ENCODE measurements at regions of chr19 and their contacts with region 1.

Region 1: DNA sequence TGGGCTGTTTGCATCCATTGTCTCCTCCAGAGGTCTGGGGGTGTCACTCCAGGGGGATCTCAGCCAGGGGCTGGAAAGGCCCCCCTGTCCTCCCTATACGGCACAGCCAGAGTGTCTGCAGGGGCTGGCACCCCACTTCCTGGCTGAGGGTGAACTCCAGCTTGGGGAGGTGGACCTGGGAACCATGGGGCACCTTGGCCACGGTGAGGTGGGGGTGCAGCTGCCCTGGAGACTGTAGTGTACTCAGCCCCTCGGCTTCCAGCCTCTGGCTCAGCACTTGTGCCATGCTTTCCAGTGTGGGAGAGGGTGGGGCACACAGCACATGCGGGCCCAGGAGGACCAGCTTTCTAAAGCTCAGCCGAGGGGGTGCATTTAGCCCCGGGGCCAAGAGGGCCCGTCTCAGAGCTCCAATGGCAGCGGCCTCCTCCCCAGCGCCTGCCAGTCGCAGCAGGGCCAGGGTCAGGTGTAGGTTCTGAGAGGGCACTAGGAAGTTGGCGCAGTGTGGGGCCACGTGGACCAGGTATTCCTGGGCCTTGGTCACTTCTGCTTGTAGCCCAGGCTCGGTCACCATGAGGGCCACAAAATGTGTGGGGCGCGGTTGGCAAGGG is 1.4 kb downstream of the LENG9 start:
- DNase-seq: peak; percentile 37
- H3K4me3 ChIP-seq: peak overlapping the region; percentile 66
- H3K27ac ChIP-seq: peak overlapping the region; percentile 97
- H3K4me1 ChIP-seq: peaks cover 30% of the 10 kb centered on the region
- H3K27me3 ChIP-seq: no peaks in the 10 kb centered on the region
- CTCF ChIP-seq: no peak

Region 2: DNA sequence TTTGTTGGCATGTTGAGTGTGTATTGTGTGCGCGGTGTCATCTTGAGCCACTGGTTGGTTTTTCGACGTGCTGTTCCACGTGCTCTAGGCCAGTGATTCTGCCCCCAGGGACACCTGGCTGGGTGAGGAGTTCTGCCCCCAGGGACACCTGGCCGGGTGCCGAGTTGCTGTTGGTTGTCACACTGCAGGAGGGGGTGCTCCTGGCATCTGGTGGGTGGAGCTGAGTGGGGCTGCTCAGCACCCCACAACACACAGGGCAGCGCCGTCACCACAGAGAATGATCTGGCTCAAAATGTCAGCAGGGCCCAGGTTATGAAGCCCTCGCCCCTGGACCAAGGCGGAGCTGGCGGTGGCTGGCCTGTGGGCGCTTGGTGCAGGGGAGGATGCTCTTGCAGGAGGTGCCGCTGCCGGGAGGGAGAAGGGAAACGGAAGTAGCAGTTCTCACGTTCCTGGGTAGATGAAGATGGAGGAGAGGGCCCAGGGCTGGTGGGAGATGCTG is 27.4 kb before region 1 on chr19:
- CTCF ChIA-PET with region 1: no interaction called
- POLR2A ChIA-PET with region 1: no interaction called
- intact Hi-C with region 1: no loop called
- DNase-seq: no peak
- H3K4me3 ChIP-seq: no peak overlapping the region
- H3K27ac ChIP-seq: no peak overlapping the region
- H3K4me1 ChIP-seq: peaks cover 16% of the 10 kb centered on the region
- H3K27me3 ChIP-seq: peaks cover 2% of the 10 kb centered on the region
- CTCF ChIP-seq: no peak

Region 3: DNA sequence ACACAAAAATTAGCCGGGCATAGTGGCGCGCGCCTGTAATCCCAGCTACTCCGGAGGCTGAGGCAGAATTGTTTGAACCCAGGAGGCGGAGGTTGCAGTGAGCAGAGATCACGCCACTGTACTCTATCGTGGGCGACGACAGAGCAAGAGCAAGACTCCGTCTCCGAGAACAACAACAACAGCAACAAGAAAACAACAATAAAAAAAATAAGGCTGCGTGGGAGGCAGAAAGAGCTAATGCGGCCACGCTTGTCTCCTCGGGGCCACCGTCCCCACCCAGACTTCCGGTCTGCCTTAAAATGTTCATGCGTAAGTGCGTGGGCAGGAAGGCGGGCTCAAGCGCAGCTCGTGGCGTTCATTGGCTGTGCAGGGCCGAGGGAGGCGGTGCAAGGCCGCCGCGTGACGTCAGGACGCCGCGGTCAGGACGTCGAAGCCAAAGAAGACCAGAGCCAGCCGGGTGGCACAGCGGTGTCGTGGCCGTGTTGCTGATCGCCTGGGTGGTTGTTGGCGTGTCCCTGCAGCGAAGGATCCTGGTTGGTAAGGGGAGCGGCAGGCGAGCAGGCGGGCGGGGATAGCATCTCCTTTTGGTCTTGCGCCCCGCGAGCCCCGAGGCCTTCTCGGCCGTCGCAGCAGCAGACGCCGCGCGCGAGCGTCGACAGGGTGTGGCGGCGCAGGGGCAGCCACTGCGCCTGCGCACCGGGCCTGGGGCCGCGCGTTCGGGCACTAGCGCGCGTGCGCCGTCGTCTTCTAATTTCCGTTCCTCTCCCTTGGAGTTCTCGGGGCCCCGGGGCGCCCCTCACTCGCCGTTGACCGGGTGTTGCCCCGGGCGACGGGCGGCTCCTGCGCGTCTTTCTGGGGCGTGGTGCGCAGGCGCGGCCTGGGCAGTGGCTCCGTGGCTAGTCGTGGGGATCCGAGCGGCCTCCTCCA is 13.1 kb before region 1 on chr19 and contains the start of gene LENG8:
- CTCF ChIA-PET with region 1: interaction called, 3 read pairs
- POLR2A ChIA-PET with region 1: interaction called, 12 read pairs
- intact Hi-C with region 1: no loop called
- DNase-seq: peak; percentile 97
- H3K4me3 ChIP-seq: peak within 1 kb of the TSS; percentile 85
- H3K27ac ChIP-seq: peak within 1 kb of the TSS; percentile 98
- H3K4me1 ChIP-seq: peaks cover 14% of the 10 kb centered on the region
- H3K27me3 ChIP-seq: no peaks in the 10 kb centered on the region
- CTCF ChIP-seq: no peak
- total RNA-seq, gene LENG8: 129 and 149 TPM in 2 replicates

Region 4: DNA sequence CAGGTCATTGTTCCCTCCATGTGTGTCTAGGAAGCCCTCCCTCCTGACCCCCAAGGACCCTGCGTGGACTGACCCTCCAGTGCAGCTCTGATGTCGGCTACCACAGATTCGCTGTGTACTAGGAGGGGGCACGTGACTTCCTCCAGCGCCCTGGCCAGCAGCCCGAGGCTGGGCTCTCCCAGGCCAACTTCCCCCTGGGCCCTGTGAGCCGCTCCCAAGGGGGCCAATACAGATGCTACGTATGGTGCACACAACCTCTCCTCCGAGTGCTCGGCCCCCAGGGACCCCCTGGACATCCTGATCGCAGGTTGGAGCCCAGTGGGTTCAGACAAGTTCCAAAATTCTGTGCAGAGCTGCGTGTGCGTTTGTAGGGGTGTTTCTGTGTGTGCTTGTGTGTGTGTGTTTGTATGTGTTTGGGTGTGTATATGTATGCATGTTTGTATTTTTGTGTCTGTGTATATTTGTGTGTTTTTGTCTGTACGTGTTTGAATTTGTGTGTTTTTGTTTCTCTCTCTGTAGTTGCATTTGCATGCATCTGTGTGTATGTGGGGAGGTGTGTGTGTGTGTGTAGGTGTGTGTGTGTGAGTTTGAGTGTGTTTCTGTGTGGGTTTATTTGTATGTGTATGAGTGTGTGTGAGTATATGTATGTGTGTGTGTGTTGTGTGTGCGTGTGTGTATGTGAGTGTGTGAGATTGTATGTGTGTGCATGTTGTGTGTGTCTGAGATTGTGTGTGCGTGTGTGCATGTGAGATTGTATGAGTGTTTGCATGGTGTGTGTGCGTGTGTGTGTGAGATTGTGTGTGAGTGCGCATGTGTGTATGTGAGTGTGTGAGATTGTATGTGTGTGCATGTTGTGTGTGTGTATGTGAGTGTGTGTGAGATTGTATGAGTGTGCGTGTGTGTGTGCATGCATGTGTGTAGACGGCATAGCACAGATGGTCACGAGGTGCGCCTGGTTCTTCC is 90.1 kb after region 1 on chr19:
- CTCF ChIA-PET with region 1: no interaction called
- POLR2A ChIA-PET with region 1: no interaction called
- intact Hi-C with region 1: no loop called
- DNase-seq: no peak
- H3K4me3 ChIP-seq: no peak overlapping the region
- H3K27ac ChIP-seq: no peak overlapping the region
- H3K4me1 ChIP-seq: no peaks in the 10 kb centered on the region
- H3K27me3 ChIP-seq: peaks cover 20% of the 10 kb centered on the region
- CTCF ChIP-seq: no peak

Region 5: GRCh38 chr19:55624109-55625003 is 1162.2 kb after region 1 on chr19 and contains the start of gene ZNF784:
- CTCF ChIA-PET with region 1: no interaction called
- POLR2A ChIA-PET with region 1: interaction called, 10 read pairs
- intact Hi-C with region 1: no loop called
- DNase-seq: peak; percentile 96
- H3K4me3 ChIP-seq: peak within 1 kb of the TSS; percentile 67
- H3K27ac ChIP-seq: peak within 1 kb of the TSS; percentile 97
- H3K4me1 ChIP-seq: peaks cover 5% of the 10 kb centered on the region
- H3K27me3 ChIP-seq: no peaks in the 10 kb centered on the region
- CTCF ChIP-seq: no peak
- total RNA-seq, gene ZNF784: 6.8 and 7.1 TPM in 2 replicates